ENCODE measurements at regions of chr12 and their contacts with region 1.

Region 1: GRCh38 chr12:120292661-120293531 is at the start of gene RNU4-1:
- DNase-seq: peak; percentile 52 to 90 (median 85)
- H3K4me3 ChIP-seq: peak within 1 kb of the TSS; percentile 91
- H3K4me3 Mint-ChIP-seq: no peak within 1 kb of the TSS
- H3K27ac ChIP-seq: peak within 1 kb of the TSS; percentile 100
- H3K27ac Mint-ChIP-seq: no peak within 1 kb of the TSS
- H3K4me1 ChIP-seq: peaks cover 16% of the 10 kb centered on the region
- H3K4me1 Mint-ChIP-seq: peaks cover 4 to 7% (median 5%) of the 10 kb centered on the region in 3 donors
- H3K27me3 ChIP-seq: no peaks in the 10 kb centered on the region
- H3K27me3 Mint-ChIP-seq: no peaks in the 10 kb centered on the region
- total RNA-seq, gene RNU4-1: 628 to 678 TPM

Region 2: GRCh38 chr12:120079411-120080026 is 213.4 kb before region 1 on chr12:
- CTCF ChIA-PET with region 1: no interaction called
- POLR2A ChIA-PET with region 1: no interaction called
- DNase-seq: no peak
- H3K4me3 ChIP-seq: no peak overlapping the region
- H3K4me3 Mint-ChIP-seq: no peak overlapping the region
- H3K27ac ChIP-seq: no peak overlapping the region
- H3K27ac Mint-ChIP-seq: peak overlapping the region in 5 of 8 donors; percentile 30 to 87 (median 47)
- H3K4me1 ChIP-seq: peaks cover 10% of the 10 kb centered on the region
- H3K4me1 Mint-ChIP-seq: peaks cover 8 to 10% (median 9%) of the 10 kb centered on the region in 3 donors
- H3K27me3 ChIP-seq: no peaks in the 10 kb centered on the region
- H3K27me3 Mint-ChIP-seq: no peaks in the 10 kb centered on the region

Region 3: GRCh38 chr12:120199595-120200306 is 93.1 kb before region 1 on chr12:
- CTCF ChIA-PET with region 1: interaction called, 28 read pairs
- POLR2A ChIA-PET with region 1: interaction called, 79 read pairs
- DNase-seq: peak in 2 of 5 donors; percentile 14 to 23
- H3K4me3 ChIP-seq: peak overlapping the region; percentile 99
- H3K4me3 Mint-ChIP-seq: peak overlapping the region; percentile 85 to 99 (median 98)
- H3K27ac ChIP-seq: peak overlapping the region; percentile 86
- H3K27ac Mint-ChIP-seq: peak overlapping the region; percentile 89 to 99 (median 96)
- H3K4me1 ChIP-seq: peaks cover 46% of the 10 kb centered on the region
- H3K4me1 Mint-ChIP-seq: peaks cover 36 to 51% (median 44%) of the 10 kb centered on the region in 3 donors
- H3K27me3 ChIP-seq: no peaks in the 10 kb centered on the region
- H3K27me3 Mint-ChIP-seq: peaks cover 0 to 1% of the 10 kb centered on the region in 2 donors

Region 4: DNA sequence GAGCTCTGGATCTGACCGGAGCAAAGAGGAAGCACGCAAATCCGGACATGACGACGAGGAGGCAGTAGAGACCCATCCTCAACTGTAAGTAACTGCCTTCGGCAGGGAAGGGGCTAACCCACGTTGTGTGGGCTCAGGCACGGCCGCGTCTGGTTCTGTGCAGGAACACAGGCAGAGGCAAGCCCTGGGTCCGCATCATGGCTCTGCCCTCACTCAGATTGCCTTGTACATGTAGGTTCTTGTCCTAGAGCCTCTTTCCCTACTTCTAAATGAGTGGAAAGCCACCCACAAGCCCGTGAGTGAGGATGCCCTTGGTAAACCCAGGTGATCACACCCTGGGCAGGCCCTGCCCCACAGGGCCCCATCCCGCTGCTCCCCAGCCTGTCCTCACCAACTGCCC is 83.0 kb before region 1 on chr12:
- CTCF ChIA-PET with region 1: no interaction called
- POLR2A ChIA-PET with region 1: no interaction called
- DNase-seq: no peak
- H3K4me3 ChIP-seq: no peak overlapping the region
- H3K4me3 Mint-ChIP-seq: peak overlapping the region in 1 of 7 donors; percentile 61
- H3K27ac ChIP-seq: no peak overlapping the region
- H3K27ac Mint-ChIP-seq: peak overlapping the region in 1 of 8 donors; percentile 48
- H3K4me1 ChIP-seq: no peaks in the 10 kb centered on the region
- H3K4me1 Mint-ChIP-seq: no peaks in the 10 kb centered on the region
- H3K27me3 ChIP-seq: no peaks in the 10 kb centered on the region
- H3K27me3 Mint-ChIP-seq: peaks cover 0 to 1% of the 10 kb centered on the region in 2 donors

Measured in CD8-positive, alpha-beta memory T cell (primary cell).